Activated CD4-positive, alpha-beta memory T cell treated with anti-CD3 and anti-CD28 coated beads for 36 hours (primary cell): ENCODE measurements at regions of chr11 and their contacts with region 1.

Region 1: GRCh38 chr11:17063171-17064002 is 14.1 kb downstream of the RPS13 start:
- DNase-seq: peak; percentile 73
- H3K4me3 Mint-ChIP-seq: no peak overlapping the region
- H3K27ac Mint-ChIP-seq: no peak overlapping the region
- H3K4me1 Mint-ChIP-seq: no peaks in the 10 kb centered on the region
- H3K27me3 Mint-ChIP-seq: no peaks in the 10 kb centered on the region

Region 2: GRCh38 chr11:16785520-16786128 is 277.8 kb before region 1 on chr11:
- CTCF ChIA-PET with region 1: interaction called, 103 read pairs
- POLR2A ChIA-PET with region 1: no interaction called
- intact Hi-C with region 1: loop called (anchors 1 kb)
- DNase-seq: peak; percentile 72
- H3K4me3 Mint-ChIP-seq: no peak overlapping the region
- H3K27ac Mint-ChIP-seq: no peak overlapping the region
- H3K4me1 Mint-ChIP-seq: no peaks in the 10 kb centered on the region
- H3K27me3 Mint-ChIP-seq: no peaks in the 10 kb centered on the region

Region 3: GRCh38 chr11:16815043-16815767 is 248.2 kb before region 1 on chr11:
- CTCF ChIA-PET with region 1: interaction called, 92 read pairs
- POLR2A ChIA-PET with region 1: no interaction called
- intact Hi-C with region 1: loop called (anchors 1 kb)
- DNase-seq: no peak
- H3K4me3 Mint-ChIP-seq: no peak overlapping the region
- H3K27ac Mint-ChIP-seq: no peak overlapping the region
- H3K4me1 Mint-ChIP-seq: no peaks in the 10 kb centered on the region
- H3K27me3 Mint-ChIP-seq: no peaks in the 10 kb centered on the region

Region 4: DNA sequence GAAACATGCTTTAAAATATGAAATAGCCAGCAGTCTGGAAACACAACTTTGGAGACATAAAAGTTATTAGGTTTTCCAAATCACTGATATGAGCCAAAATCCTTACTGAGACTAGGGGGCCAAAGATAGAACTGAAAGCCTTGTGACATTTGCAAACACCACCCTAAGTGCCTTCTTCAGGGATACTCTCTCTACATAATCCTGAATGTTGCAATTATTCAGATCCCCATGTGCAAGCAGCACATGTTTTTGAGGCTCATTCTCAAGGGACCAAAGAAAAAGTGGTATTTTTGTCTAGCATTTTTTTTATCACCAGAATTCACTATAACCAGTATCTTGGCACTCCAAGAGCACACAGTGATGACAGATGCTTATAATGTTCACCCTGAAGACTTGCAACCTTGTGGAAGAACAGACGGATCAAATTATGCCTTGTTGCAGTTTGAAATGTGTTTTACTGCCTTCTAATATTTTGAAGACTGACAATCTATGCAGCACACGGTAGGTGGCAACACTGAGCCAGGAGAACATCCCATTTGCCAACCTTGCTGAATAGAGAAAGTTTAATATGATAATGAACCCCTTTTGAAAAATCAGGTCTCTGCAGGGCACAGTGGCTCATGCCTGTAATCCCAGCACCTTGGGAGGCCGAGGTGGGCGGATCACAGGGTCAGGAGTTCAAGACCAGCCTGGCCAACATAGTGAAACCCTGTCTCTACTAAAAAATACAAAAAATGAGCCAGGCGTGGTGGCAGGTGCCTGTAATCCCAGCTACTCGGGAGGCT is 127.7 kb before region 1 on chr11:
- CTCF ChIA-PET with region 1: interaction called, 21 read pairs
- POLR2A ChIA-PET with region 1: no interaction called
- intact Hi-C with region 1: loop called (anchors 2 kb)
- DNase-seq: peak; percentile 42
- H3K4me3 Mint-ChIP-seq: no peak overlapping the region
- H3K27ac Mint-ChIP-seq: no peak overlapping the region
- H3K4me1 Mint-ChIP-seq: peaks cover 3% of the 10 kb centered on the region
- H3K27me3 Mint-ChIP-seq: peaks cover 2% of the 10 kb centered on the region

Region 5: DNA sequence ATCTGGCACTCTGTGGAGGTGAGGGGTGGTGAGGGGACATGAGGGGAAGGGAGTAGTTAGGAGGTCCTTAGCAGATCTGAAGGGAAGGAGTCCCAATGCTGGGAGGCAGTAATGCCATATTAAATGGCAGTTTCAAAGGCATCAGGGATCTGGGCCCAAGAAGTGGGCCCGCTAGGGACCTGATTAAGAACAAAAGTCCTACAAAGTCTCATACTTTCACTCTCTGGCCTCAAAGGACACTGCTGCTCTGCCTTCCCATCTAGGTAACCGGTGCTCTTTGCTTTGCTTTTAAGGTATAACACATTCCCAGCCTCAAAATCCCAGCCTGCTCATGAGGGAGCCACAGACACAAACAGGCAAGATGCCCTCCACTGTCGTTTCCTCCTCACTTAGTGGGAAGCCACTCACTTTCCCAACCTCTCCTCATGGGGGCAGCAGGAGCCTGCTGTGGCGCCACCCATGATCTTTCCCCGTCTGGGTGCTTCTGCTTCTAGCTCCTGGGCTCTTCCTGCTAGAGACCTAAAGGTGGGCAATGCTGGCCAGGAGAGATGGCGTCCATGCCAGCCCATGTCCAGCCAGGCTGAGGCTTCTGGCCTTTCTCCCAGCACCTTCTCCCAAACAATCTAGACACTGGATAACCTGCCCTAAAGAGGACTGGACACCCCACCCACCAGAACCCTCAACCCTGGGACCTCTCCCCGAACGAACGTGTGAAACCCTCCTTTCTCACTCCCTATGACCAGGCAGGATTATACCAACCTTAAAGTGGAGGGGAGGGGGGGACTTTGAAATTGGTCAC is 117.5 kb before region 1 on chr11:
- CTCF ChIA-PET with region 1: interaction called, 29 read pairs
- POLR2A ChIA-PET with region 1: interaction called, 4 read pairs
- intact Hi-C with region 1: loop called (anchors 1 kb)
- DNase-seq: peak; percentile 71
- H3K4me3 Mint-ChIP-seq: no peak overlapping the region
- H3K27ac Mint-ChIP-seq: no peak overlapping the region
- H3K4me1 Mint-ChIP-seq: peaks cover 9% of the 10 kb centered on the region
- H3K27me3 Mint-ChIP-seq: no peaks in the 10 kb centered on the region

Region 6: DNA sequence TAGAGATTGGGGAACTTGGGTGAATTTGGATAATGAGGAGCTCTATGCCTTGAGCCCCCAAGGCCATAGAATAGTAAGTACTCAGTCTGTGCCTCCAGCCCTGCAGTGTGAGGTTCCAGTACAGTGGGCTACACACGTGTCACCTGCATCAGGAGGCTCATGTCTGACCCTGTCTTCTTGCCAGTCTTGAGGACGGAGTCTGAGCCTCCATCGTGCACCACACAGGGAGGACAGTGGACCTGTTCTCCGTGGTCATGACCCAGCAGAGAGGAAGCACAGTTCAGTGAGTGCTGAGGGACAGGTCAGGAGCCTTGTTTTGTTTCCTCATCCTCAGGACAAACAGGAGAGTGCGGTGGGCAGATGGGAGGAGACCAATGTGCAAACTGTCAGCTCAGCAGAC is 16.7 kb before region 1 on chr11:
- CTCF ChIA-PET with region 1: no interaction called
- POLR2A ChIA-PET with region 1: no interaction called
- intact Hi-C with region 1: no loop called
- DNase-seq: no peak
- H3K4me3 Mint-ChIP-seq: no peak overlapping the region
- H3K27ac Mint-ChIP-seq: no peak overlapping the region
- H3K4me1 Mint-ChIP-seq: no peaks in the 10 kb centered on the region
- H3K27me3 Mint-ChIP-seq: no peaks in the 10 kb centered on the region